Psoas muscle (tissue), 8 donors: ENCODE measurements at regions of chr19 and their contacts with region 1.

Region 1: GRCh38 chr19:13952154-13953035 is at the start of gene DCAF15:
- DNase-seq: peak; percentile 99 to 100
- ATAC-seq: peak; percentile 97 to 100 (median 98)
- H3K4me3 ChIP-seq: peak within 1 kb of the TSS; percentile 80
- H3K27ac ChIP-seq: peak within 1 kb of the TSS; percentile 85
- H3K4me1 ChIP-seq: peaks cover 10% of the 10 kb centered on the region
- H3K27me3 ChIP-seq: no peaks in the 10 kb centered on the region
- CTCF ChIP-seq: no peak
- total RNA-seq, gene DCAF15: 9.2 to 25.3 (median 16.0) TPM

Region 2: GRCh38 chr19:13905938-13906904 is 46.2 kb before region 1 on chr19 and contains the starts of genes BRME1 and CC2D1A:
- intact Hi-C with region 1: loop called (anchors 5 kb)
- DNase-seq: peak; percentile 95 to 97
- ATAC-seq: peak; percentile 98 to 100 (median 99)
- H3K4me3 ChIP-seq: peak within 1 kb of the TSS; percentile 83
- H3K27ac ChIP-seq: peak within 1 kb of the TSS; percentile 70
- H3K4me1 ChIP-seq: peaks cover 3% of the 10 kb centered on the region
- H3K27me3 ChIP-seq: no peaks in the 10 kb centered on the region
- CTCF ChIP-seq: no peak
- total RNA-seq, gene BRME1: 0.27 to 1.5 (median 1.0) TPM
- total RNA-seq, gene CC2D1A: 21.1 to 26.1 (median 24.6) TPM

Region 3: GRCh38 chr19:13938301-13939064 is 13.9 kb before region 1 on chr19 and contains the start of gene PODNL1:
- intact Hi-C with region 1: no loop called
- DNase-seq: no peak
- ATAC-seq: peak in 2 of 4 donors; percentile 24 to 27
- H3K4me3 ChIP-seq: no peak within 1 kb of the TSS
- H3K27ac ChIP-seq: no peak within 1 kb of the TSS
- H3K4me1 ChIP-seq: no peaks in the 10 kb centered on the region
- H3K27me3 ChIP-seq: peaks cover 0 to 5% (median 3%) of the 10 kb centered on the region in 3 donors
- CTCF ChIP-seq: no peak
- total RNA-seq, gene PODNL1: 0.18 to 1.3 (median 0.39) TPM

Region 4: GRCh38 chr19:13995017-13995728 is 42.8 kb after region 1 on chr19:
- intact Hi-C with region 1: no loop called
- DNase-seq: peak; percentile 54 to 77
- ATAC-seq: peak; percentile 89 to 94 (median 92)
- H3K4me3 ChIP-seq: no peak overlapping the region
- H3K27ac ChIP-seq: peak overlapping the region; percentile 73
- H3K4me1 ChIP-seq: peaks cover 16% of the 10 kb centered on the region
- H3K27me3 ChIP-seq: no peaks in the 10 kb centered on the region
- CTCF ChIP-seq: no peak